HAP-1 (cell line): ENCODE measurements at regions of chr1 and their contacts with region 1.

Region 1: GRCh38 chr1:162878000-162878596 is 17.1 kb upstream of the CCDC190 start:
- DNase-seq: peak; percentile 30 to 70
- H3K4me3 ChIP-seq: no peak overlapping the region
- H3K4me1 ChIP-seq: no peaks in the 10 kb centered on the region
- H3K27me3 ChIP-seq: peaks cover 7% of the 10 kb centered on the region; the same call in 1 of the 2 replicates

Region 2: DNA sequence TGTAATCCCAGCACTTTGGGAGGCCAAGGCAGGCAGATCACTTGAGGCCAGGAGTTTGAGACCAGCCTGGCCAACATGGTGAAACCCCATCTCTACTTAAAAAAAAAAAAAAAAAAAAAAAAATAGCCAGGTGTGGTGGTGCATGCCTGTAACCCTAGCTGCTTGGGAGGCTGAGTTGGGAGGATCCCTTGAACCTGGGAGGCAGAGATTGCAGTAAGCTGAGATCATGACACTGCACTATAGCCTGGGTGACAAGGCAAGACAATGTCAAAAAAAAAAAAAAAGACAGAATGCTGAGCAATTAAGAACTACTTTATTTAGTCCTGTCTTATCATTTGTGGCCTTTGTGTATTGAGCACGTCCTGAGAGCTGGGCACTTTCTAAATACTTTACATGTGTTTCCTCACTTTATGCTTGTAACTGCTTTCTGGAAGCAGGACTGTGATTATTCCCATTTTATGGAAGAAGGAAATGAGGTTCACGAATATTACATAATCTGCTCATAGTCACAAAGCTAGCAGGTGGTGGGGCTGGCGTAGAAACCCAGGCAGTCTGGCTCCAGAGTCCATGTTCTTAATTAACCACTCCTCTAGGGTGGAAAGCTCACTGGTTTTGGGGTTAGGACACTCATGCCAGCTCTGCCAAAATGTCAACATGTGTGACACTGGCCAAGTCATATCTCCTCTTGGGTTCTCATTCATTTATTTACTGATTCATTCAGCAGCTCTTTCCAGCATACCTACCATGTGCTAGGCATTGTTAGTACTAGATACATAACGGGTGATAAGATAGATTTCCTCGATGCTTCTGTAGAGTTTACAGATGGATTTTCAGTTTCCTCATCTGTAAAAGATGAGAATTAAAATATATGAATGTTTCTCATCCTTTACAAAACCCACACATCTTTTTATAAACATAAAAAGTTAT is 188.1 kb before region 1 on chr1:
- in situ Hi-C with region 1: no loop called
- DNase-seq: no peak
- H3K4me3 ChIP-seq: no peak overlapping the region
- H3K4me1 ChIP-seq: peaks cover 11% of the 10 kb centered on the region
- H3K27me3 ChIP-seq: no peaks in the 10 kb centered on the region

Region 3: GRCh38 chr1:163174524-163175437 is 296.7 kb after region 1 on chr1:
- in situ Hi-C with region 1: loop called (anchors 10 kb)
- DNase-seq: peak; percentile 52 to 76
- H3K4me3 ChIP-seq: no peak overlapping the region
- H3K4me1 ChIP-seq: no peaks in the 10 kb centered on the region
- H3K27me3 ChIP-seq: peaks cover 5% of the 10 kb centered on the region; the same call in 1 of the 2 replicates